ENCODE measurements at regions of chr2 and their contacts with region 1.

Region 1: DNA sequence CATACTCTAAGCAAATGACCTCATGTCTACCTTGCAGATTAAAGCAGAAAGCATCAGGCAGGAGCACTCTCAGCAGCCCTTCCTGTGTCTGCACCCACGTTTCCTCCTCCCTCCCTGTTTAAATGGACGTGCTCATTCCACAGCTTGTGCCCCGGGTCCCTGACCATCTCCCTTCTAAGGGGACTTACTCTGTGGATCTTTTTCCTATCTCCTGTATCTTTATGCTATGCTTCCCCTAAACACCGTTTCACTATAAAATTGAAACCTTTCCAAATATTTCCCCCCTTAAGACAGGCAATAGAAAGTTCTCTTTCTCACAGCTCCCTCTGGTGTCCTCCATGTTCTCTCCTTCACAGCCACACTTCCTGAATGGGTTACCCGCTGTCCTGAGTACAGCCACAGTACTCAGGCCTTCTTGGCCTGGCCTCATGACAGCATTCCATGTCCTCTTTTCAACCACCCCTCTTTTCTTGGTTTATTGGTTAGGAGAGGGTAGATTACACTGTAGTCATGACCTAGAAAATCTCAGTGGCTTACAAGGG is 41.1 kb downstream of the TMEM185B start:
- DNase-seq: no peak
- H3K4me3 ChIP-seq: no peak overlapping the region
- H3K27ac ChIP-seq: no peak overlapping the region
- H3K4me1 ChIP-seq: no peaks in the 10 kb centered on the region
- H3K27me3 ChIP-seq: no peaks in the 10 kb centered on the region
- CTCF ChIP-seq: no peak

Region 2: DNA sequence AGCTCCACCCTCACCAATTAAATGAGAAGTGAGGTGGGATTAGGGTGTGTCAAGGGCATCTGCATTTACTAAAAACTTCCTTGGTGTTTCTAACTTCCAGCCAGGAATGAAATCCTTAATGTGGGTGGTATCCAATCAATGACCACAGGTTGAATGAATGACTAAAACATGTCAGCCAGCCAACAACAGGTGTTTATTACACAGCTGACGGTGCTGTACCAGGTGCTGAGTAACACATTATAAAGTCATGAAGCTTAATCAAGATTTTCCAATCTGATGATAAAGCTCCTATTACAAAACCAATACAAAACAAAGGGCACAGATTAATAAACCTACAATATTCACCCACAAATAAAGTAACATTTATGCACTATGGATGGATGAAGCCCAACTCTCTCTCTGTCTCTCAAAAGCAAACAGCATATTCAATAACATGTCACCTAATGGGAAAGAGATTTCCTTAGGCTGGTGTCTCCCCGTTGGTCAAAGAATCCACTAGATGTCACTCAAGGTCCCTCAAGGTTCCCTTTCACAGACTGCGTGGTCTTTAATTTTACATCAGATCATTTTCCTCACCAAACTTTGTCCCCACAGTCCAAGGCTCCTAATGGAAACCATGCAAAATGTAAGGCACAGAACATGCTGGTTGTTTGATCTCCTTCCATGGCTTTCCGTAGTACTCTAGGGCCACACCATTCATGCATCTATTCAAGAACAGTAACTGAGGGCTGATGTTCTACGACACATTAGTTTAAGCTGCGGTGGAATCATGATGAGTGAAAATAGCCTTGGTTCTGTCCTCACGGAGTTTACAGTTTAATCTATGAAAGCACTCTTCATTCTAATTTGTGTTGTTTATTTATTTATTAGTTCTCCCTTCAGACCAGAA is 428.8 kb before region 1 on chr2:
- intact Hi-C with region 1: loop called (anchors 5 kb)
- DNase-seq: peak; percentile 27
- H3K4me3 ChIP-seq: no peak overlapping the region
- H3K27ac ChIP-seq: no peak overlapping the region
- H3K4me1 ChIP-seq: no peaks in the 10 kb centered on the region
- H3K27me3 ChIP-seq: no peaks in the 10 kb centered on the region
- CTCF ChIP-seq: peak; percentile 66

Measured in colonic mucosa (tissue), 4 donors.